CD8-positive, alpha-beta memory T cell (primary cell): ENCODE measurements at regions of chr12 and their contacts with region 1.

Region 1: DNA sequence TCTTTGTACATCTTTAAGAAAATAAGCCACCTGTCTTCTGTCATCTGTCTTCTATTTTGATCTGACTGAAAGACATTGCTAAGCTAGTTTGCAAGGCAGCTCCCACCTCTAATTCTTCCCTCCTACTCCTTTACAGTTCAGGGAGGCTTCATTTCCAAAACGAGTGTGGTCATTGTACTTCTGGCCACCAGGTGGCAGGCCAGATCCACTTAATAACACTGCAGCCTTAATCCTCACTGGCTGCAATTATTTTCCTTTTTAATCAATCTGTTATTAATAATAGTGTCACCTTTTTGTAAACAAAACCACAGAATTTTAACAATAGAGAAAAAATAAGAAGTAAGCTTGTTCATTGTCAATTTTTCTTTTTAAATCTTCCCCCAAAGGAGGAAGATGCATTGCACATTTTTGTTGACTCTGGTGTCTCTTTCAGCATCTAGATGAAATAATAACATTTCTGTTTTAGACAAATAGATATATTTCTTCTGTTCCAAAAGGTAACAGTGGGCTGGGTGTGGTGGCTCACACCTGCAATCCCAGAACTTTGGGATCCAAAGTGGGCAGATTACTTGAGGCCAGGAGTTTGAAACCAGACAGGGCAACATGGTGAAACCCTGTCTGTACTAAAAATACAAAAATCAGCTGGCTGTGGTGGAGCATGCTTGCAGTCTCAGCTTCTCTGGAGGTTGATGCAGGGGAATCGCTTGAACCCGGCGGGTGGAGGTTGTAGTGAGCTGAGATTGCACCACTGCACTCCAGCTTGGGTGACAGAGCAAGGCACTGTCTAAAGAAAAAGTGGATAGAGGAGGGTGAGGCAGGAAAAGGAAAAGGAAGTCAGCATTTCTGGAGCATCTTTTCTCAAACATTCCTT is 23.3 kb downstream of the GABARAPL1 start:
- DNase-seq: peak; percentile 12 to 63 (median 37)
- H3K4me3 ChIP-seq: no peak overlapping the region
- H3K4me3 Mint-ChIP-seq: peak overlapping the region; percentile 13 to 60 (median 41)
- H3K27ac ChIP-seq: no peak overlapping the region
- H3K27ac Mint-ChIP-seq: peak overlapping the region in 7 of 8 donors; percentile 28 to 85 (median 71)
- H3K4me1 ChIP-seq: peaks cover 5% of the 10 kb centered on the region
- H3K4me1 Mint-ChIP-seq: peaks cover 21 to 51% (median 45%) of the 10 kb centered on the region in 3 donors
- H3K27me3 ChIP-seq: no peaks in the 10 kb centered on the region
- H3K27me3 Mint-ChIP-seq: no peaks in the 10 kb centered on the region

Region 2: DNA sequence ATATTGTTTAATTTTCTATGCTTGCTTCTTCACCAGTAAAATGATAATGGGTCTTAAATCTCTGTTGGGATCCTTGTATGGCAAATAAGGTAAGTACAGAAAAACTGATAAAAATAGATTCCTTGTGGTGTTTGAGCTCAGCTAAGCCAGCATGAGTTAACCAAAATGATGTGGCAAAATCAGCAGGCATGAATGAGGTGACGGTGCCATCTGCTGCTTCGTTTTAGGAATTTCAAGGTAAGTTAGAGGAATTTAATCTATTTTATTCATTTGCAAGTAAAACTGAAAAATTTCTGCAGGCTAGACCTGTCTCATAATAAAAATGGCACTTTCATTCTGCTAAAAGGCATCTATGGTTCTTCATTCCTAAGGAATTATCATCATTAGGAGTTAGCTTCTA is 96.0 kb before region 1 on chr12:
- CTCF ChIA-PET with region 1: no interaction called
- POLR2A ChIA-PET with region 1: no interaction called
- DNase-seq: peak in 3 of 5 donors; percentile 12 to 41 (median 35)
- H3K4me3 ChIP-seq: no peak overlapping the region
- H3K4me3 Mint-ChIP-seq: no peak overlapping the region
- H3K27ac ChIP-seq: no peak overlapping the region
- H3K27ac Mint-ChIP-seq: no peak overlapping the region
- H3K4me1 ChIP-seq: no peaks in the 10 kb centered on the region
- H3K4me1 Mint-ChIP-seq: no peaks in the 10 kb centered on the region
- H3K27me3 ChIP-seq: no peaks in the 10 kb centered on the region
- H3K27me3 Mint-ChIP-seq: peaks cover 0 to 20% of the 10 kb centered on the region in 2 donors

Region 3: GRCh38 chr12:10331642-10332239 is 95.7 kb after region 1 on chr12:
- CTCF ChIA-PET with region 1: interaction called, 11 read pairs
- POLR2A ChIA-PET with region 1: no interaction called
- DNase-seq: peak in 2 of 5 donors; percentile 30 to 48
- H3K4me3 ChIP-seq: no peak overlapping the region
- H3K4me3 Mint-ChIP-seq: no peak overlapping the region
- H3K27ac ChIP-seq: no peak overlapping the region
- H3K27ac Mint-ChIP-seq: peak overlapping the region in 5 of 8 donors; percentile 6 to 36 (median 18)
- H3K4me1 ChIP-seq: no peaks in the 10 kb centered on the region
- H3K4me1 Mint-ChIP-seq: peaks cover 13 to 42% (median 16%) of the 10 kb centered on the region in 3 donors
- H3K27me3 ChIP-seq: no peaks in the 10 kb centered on the region
- H3K27me3 Mint-ChIP-seq: no peaks in the 10 kb centered on the region

Region 4: GRCh38 chr12:10501031-10501430 is 265.0 kb after region 1 on chr12:
- CTCF ChIA-PET with region 1: interaction called, 10 read pairs
- POLR2A ChIA-PET with region 1: no interaction called
- DNase-seq: peak in 2 of 5 donors; percentile 5 to 11
- H3K4me3 ChIP-seq: no peak overlapping the region
- H3K4me3 Mint-ChIP-seq: peak overlapping the region in 5 of 7 donors; percentile 4 to 42 (median 17)
- H3K27ac ChIP-seq: no peak overlapping the region
- H3K27ac Mint-ChIP-seq: peak overlapping the region in 6 of 8 donors; percentile 1 to 77 (median 45)
- H3K4me1 ChIP-seq: no peaks in the 10 kb centered on the region
- H3K4me1 Mint-ChIP-seq: peaks cover 51 to 62% (median 52%) of the 10 kb centered on the region in 3 donors
- H3K27me3 ChIP-seq: no peaks in the 10 kb centered on the region
- H3K27me3 Mint-ChIP-seq: no peaks in the 10 kb centered on the region

Region 5: DNA sequence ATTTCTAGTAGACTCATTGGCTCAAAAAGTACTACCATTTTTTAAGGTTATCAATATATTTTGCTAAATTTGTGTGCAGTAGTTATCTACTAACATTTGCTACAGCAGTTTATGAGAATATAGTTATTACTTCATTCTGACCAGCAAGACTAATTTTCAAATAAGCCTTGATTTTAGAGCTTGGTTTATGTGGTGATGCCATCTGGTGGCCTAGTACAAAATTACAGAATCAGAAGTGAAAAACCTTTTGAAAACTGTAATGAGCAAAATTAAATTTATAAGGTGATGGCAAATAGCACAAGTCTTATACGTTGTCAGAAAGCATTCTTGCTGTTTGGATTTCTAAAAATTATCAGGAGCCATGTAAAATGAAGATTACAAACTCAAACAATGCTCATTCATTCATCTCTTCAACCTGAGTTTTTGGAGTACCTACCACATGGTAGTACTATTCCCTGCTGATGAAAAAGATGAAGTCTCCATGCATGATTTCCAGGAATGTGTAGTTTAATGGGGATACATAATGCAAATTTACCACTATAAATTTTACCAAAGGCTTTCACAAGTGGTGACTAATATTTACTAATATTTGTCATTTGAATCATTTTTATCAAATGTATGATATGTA is 326.4 kb after region 1 on chr12:
- CTCF ChIA-PET with region 1: interaction called, 18 read pairs
- POLR2A ChIA-PET with region 1: no interaction called
- DNase-seq: peak in 3 of 5 donors; percentile 49 to 60 (median 50)
- H3K4me3 ChIP-seq: no peak overlapping the region
- H3K4me3 Mint-ChIP-seq: peak overlapping the region in 2 of 7 donors; percentile 30 to 38
- H3K27ac ChIP-seq: no peak overlapping the region
- H3K27ac Mint-ChIP-seq: peak overlapping the region in 5 of 8 donors; percentile 33 to 76 (median 59)
- H3K4me1 ChIP-seq: peaks cover 42% of the 10 kb centered on the region
- H3K4me1 Mint-ChIP-seq: peaks cover 67 to 85% (median 84%) of the 10 kb centered on the region in 3 donors
- H3K27me3 ChIP-seq: no peaks in the 10 kb centered on the region
- H3K27me3 Mint-ChIP-seq: no peaks in the 10 kb centered on the region